BJ (cell line): ENCODE measurements at regions of chr19 and their contacts with region 1.

Region 1: DNA sequence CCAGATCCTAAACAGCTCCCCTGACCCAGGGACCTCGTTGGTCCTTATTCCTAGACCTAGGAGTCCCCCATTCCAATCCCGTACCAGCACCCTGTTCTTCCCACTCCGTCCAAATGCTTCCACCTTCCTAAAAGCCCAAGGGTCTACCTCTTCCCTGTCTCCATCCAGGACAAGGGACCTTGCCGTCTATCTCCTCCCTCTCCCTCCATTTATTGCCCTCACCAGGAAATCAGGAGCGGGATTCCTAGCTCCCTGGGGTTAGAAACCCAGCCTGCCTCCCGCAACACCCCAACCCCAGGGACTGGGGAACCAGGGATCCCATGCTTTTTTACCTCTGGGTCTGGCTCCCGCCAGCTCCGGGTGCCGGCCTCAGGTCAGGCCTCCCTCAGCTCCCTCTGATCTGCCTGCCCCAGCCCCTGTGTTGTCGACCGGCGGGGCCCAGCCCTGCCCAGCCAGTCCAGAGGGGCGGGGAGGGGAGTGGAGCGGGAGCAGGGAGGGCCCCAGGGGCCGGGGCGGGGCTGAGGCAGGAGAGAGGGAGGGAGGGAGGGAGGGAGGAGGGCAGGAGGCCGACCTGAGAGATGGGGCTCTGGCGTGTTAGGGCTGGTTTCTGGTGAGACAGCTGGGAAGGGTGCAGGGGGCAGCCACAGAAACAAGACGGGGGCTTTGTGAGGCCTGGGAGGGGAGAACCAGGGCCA is at the start of gene B3GNT8:
- DNase-seq: no peak
- H3K4me3 ChIP-seq: peak within 1 kb of the TSS; percentile 52
- H3K27me3 ChIP-seq: no peaks in the 10 kb centered on the region
- CTCF ChIP-seq: no peak
- polyA plus RNA-seq, gene B3GNT8: 0.36 and 0.40 TPM in 2 replicates

Region 2: GRCh38 chr19:41341669-41342490 is 85.2 kb before region 1 on chr19:
- CTCF ChIA-PET with region 1: no interaction called
- POLR2A ChIA-PET with region 1: no interaction called
- DNase-seq: no peak
- H3K4me3 ChIP-seq: no peak overlapping the region
- H3K27me3 ChIP-seq: no peaks in the 10 kb centered on the region
- CTCF ChIP-seq: no peak

Region 3: DNA sequence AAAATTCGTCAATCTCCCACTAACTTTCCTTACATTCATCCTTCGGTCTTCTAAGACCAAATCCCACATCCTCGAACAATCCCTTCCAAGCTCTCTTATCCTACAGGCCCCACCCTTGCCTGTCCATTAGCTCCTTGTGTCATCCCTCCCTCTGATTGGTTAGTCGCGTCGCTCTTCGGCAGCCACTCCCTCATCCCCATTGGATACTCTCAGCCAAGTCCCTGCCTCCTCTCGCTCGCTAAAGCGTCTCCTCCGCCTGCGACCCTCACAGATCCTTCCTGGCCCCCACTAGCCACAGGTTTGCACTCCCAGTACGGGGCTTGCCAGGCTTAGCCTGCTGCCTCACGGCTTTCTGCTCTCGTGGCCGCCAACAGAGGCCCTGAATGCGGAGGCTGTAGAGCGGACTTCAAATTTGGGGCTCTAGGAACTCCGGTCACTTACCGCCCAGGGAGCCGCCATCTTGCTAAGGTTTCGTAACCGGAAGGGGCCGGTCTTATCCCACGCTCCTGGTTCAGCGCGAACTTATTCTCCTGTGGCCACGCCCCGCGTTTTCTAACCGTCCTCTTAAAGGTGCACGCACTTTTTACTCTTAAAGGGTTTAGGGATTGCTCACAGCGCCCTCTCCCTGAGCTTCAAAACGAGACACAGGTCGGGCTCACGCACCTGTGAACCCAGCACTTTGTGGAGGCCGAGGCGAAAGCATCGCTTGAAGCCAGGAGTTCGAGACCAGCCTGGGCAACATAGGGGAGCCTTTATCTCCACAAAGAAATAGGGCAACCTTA is 12.5 kb after region 1 on chr19 and contains the start of gene DMAC2:
- CTCF ChIA-PET with region 1: interaction called, 10 read pairs
- POLR2A ChIA-PET with region 1: interaction called, 4 read pairs
- DNase-seq: peak; percentile 90
- H3K4me3 ChIP-seq: peak within 1 kb of the TSS; percentile 80
- H3K27me3 ChIP-seq: no peaks in the 10 kb centered on the region
- CTCF ChIP-seq: peak; percentile 57
- polyA plus RNA-seq, gene DMAC2: 54.0 and 82.4 TPM in 2 replicates

Region 4: GRCh38 chr19:41457241-41457640 is 30.1 kb after region 1 on chr19:
- CTCF ChIA-PET with region 1: no interaction called
- POLR2A ChIA-PET with region 1: no interaction called
- DNase-seq: no peak
- H3K4me3 ChIP-seq: no peak overlapping the region
- H3K27me3 ChIP-seq: peaks cover 3% of the 10 kb centered on the region; the same call in 1 of the 2 replicates
- CTCF ChIP-seq: no peak